Activated CD4-positive, alpha-beta memory T cell treated with anti-CD3 and anti-CD28 coated beads for 36 hours (primary cell): ENCODE measurements at regions of chr17 and their contacts with region 1.

Region 1: GRCh38 chr17:45307290-45308015 is 9.4 kb downstream of the MAP3K14 start:
- DNase-seq: peak; percentile 80
- H3K4me3 Mint-ChIP-seq: peak overlapping the region; percentile 53
- H3K27ac Mint-ChIP-seq: peak overlapping the region; percentile 97
- H3K4me1 Mint-ChIP-seq: peaks cover 84% of the 10 kb centered on the region
- H3K27me3 Mint-ChIP-seq: no peaks in the 10 kb centered on the region

Region 2: GRCh38 chr17:45228763-45229539 is 78.5 kb before region 1 on chr17:
- CTCF ChIA-PET with region 1: interaction called, 10 read pairs
- POLR2A ChIA-PET with region 1: interaction called, 74 read pairs
- intact Hi-C with region 1: loop called (anchors 1 kb)
- DNase-seq: peak; percentile 96
- H3K4me3 Mint-ChIP-seq: peak overlapping the region; percentile 100
- H3K27ac Mint-ChIP-seq: peak overlapping the region; percentile 100
- H3K4me1 Mint-ChIP-seq: peaks cover 86% of the 10 kb centered on the region
- H3K27me3 Mint-ChIP-seq: no peaks in the 10 kb centered on the region

Region 3: GRCh38 chr17:45235416-45236281 is 71.8 kb before region 1 on chr17:
- CTCF ChIA-PET with region 1: interaction called, 16 read pairs
- POLR2A ChIA-PET with region 1: no interaction called
- intact Hi-C with region 1: no loop called
- DNase-seq: peak; percentile 83
- H3K4me3 Mint-ChIP-seq: no peak overlapping the region
- H3K27ac Mint-ChIP-seq: peak overlapping the region; percentile 73
- H3K4me1 Mint-ChIP-seq: peaks cover 63% of the 10 kb centered on the region
- H3K27me3 Mint-ChIP-seq: no peaks in the 10 kb centered on the region

Region 4: DNA sequence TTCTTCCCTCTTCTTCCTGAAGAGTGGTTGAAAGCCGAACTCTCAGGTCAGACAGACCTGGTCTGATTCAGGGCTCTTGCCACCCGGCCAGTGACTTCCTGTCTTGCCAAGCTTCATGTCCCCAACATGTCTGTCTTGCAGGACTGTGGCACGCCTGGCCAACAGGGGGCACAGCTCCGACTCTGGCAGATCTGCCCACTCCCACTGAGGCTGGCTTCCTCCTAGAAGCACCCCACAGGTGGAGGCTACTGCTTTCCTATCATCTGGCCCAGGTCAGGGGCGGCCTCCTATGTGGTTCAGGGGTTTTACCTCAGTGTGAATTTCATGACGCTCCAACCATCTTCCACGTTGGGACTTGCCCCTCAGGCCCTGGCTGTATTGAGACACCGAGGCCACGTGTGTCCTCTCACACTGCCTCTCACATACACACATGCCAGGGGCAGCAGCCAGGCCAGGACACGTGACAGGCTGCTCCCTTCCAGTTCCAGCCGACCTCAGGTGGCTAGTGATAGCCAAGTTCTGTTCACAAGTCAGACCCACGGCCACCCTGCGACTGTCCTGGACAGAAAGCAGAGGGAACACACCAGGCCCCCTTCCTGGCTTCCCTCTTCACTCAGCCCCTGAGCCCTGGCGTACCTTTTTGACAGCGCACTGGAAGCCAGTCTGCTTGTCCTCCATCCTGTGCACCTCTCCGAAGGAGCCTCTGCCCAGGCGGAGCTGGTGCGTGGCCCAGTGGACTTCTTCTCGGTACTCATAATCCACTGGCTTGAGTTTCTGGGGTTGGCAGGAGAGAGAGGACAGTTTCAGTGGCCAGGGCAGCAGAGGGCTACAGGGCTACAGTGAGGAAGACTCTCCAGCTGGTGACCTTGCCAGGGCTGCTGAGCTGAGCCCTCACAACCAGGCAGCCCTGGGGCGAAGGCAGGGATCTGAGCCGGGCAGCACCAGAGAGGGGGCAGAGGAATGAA is 23.0 kb before region 1 on chr17:
- CTCF ChIA-PET with region 1: interaction called, 13 read pairs
- POLR2A ChIA-PET with region 1: no interaction called
- intact Hi-C with region 1: loop called (anchors 5 kb)
- DNase-seq: peak; percentile 61
- H3K4me3 Mint-ChIP-seq: no peak overlapping the region
- H3K27ac Mint-ChIP-seq: peak overlapping the region; percentile 85
- H3K4me1 Mint-ChIP-seq: peaks cover 4% of the 10 kb centered on the region
- H3K27me3 Mint-ChIP-seq: no peaks in the 10 kb centered on the region

Region 5: GRCh38 chr17:45357364-45357997 is 50.0 kb after region 1 on chr17:
- CTCF ChIA-PET with region 1: interaction called, 8 read pairs
- POLR2A ChIA-PET with region 1: interaction called, 11 read pairs
- intact Hi-C with region 1: loop called (anchors 1 kb)
- DNase-seq: no peak
- H3K4me3 Mint-ChIP-seq: no peak overlapping the region
- H3K27ac Mint-ChIP-seq: no peak overlapping the region
- H3K4me1 Mint-ChIP-seq: peaks cover 32% of the 10 kb centered on the region
- H3K27me3 Mint-ChIP-seq: peaks cover 7% of the 10 kb centered on the region